Naive thymus-derived CD8-positive, alpha-beta T cell (primary cell): ENCODE measurements at regions of chr3 and their contacts with region 1.

Region 1: DNA sequence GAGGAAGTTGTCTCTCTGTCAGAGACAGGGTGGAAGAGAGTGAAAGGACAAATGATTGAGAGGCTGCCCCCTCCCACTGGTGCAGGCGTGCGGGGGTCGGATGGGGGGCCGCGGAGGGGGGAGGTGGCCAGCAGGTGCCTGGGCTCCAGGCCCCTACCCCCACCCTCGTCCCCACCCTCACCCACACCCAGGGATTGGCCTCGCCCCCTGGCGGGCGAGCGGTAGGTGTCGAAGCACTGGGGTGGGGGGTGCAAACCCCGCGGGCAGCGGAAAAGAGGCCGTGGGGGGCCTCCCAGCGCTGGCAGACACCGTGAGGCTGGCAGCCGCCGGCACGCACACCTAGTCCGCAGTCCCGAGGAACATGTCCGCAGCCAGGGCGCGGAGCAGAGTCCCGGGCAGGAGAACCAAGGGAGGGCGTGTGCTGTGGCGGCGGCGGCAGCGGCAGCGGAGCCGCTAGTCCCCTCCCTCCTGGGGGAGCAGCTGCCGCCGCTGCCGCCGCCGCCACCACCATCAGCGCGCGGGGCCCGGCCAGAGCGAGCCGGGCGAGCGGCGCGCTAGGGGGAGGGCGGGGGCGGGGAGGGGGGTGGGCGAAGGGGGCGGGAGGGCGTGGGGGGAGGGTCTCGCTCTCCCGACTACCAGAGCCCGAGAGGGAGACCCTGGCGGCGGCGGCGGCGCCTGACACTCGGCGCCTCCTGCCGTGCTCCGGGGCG is at the start of gene KAT2B:
- DNase-seq: peak; percentile 78 to 93 (median 86)
- ATAC-seq: peak; percentile 74 to 76
- H3K4me3 Mint-ChIP-seq: peak within 1 kb of the TSS; percentile 96 to 100 (median 97)
- H3K27ac Mint-ChIP-seq: peak within 1 kb of the TSS; percentile 94 to 98 (median 96)
- H3K4me1 Mint-ChIP-seq: peaks cover 37 to 56% (median 51%) of the 10 kb centered on the region in 4 donors
- H3K27me3 Mint-ChIP-seq: no peaks in the 10 kb centered on the region
- polyA plus RNA-seq, gene KAT2B: 2.9 to 5.9 (median 2.9) TPM

Region 2: GRCh38 chr3:19399356-19399755 is 640.6 kb before region 1 on chr3:
- POLR2A ChIA-PET with region 1: no interaction called
- DNase-seq: no peak
- ATAC-seq: no peak
- H3K4me3 Mint-ChIP-seq: no peak overlapping the region
- H3K27ac Mint-ChIP-seq: no peak overlapping the region
- H3K4me1 Mint-ChIP-seq: peaks cover 0 to 14% (median 0%) of the 10 kb centered on the region in 4 donors
- H3K27me3 Mint-ChIP-seq: peaks cover 0 to 2% (median 0%) of the 10 kb centered on the region in 5 donors

Region 3: DNA sequence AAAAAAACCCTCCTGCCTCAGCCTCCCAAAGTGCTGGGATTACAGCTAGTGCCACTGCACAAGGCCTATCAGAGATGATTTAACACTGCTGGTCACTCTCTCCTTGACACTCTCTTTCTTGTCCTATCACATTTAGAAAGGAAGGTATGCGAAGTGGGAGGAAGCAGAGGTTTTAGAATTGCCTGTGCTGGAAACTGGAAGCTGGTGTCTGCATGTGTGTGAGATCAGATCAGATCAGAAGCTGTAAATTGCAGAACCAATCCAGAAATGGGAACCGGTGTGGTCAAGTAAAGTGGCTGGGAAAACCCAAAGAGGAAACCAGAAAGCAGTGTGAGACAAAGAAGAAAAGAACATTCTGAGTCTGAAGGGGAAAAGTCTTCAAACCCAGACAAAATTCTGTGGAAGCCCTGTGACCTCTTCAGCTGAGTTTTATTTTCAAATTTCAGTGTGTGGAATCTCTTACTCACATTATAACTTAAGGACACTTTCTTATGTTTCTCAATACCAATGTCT is 108.7 kb before region 1 on chr3:
- POLR2A ChIA-PET with region 1: no interaction called
- DNase-seq: no peak
- ATAC-seq: no peak
- H3K4me3 Mint-ChIP-seq: no peak overlapping the region
- H3K27ac Mint-ChIP-seq: peak overlapping the region in 1 of 10 donors; percentile 1
- H3K4me1 Mint-ChIP-seq: peaks cover 0 to 10% (median 6%) of the 10 kb centered on the region in 4 donors
- H3K27me3 Mint-ChIP-seq: peaks cover 13 to 28% (median 14%) of the 10 kb centered on the region in 5 donors

Region 4: GRCh38 chr3:19946832-19947548 is 92.9 kb before region 1 on chr3 and contains the start of gene RAB5A:
- POLR2A ChIA-PET with region 1: interaction called, 28 read pairs
- DNase-seq: peak; percentile 87 to 98 (median 96)
- ATAC-seq: peak; percentile 80 to 83
- H3K4me3 Mint-ChIP-seq: peak within 1 kb of the TSS; percentile 95 to 100 (median 99)
- H3K27ac Mint-ChIP-seq: peak within 1 kb of the TSS; percentile 98 to 100 (median 99)
- H3K4me1 Mint-ChIP-seq: peaks cover 18 to 55% (median 48%) of the 10 kb centered on the region in 4 donors
- H3K27me3 Mint-ChIP-seq: no peaks in the 10 kb centered on the region
- polyA plus RNA-seq, gene RAB5A: 23.9 to 31.2 (median 27.5) TPM

Region 5: GRCh38 chr3:20185701-20186598 is 146.0 kb after region 1 on chr3 and contains the start of gene SGO1:
- POLR2A ChIA-PET with region 1: interaction called, 21 read pairs
- DNase-seq: peak; percentile 97 to 100 (median 100)
- ATAC-seq: peak; percentile 94 to 95
- H3K4me3 Mint-ChIP-seq: no peak within 1 kb of the TSS
- H3K27ac Mint-ChIP-seq: no peak within 1 kb of the TSS
- H3K4me1 Mint-ChIP-seq: peaks cover 0 to 4% (median 0%) of the 10 kb centered on the region in 4 donors
- H3K27me3 Mint-ChIP-seq: no peaks in the 10 kb centered on the region
- polyA plus RNA-seq, gene SGO1: 0.45 to 0.76 (median 0.49) TPM